Head of caudate nucleus (tissue), 42 donors: ENCODE measurements at regions of chr16 and their contacts with region 1.

Region 1: GRCh38 chr16:51762081-51762996 is 611.3 kb upstream of the SALL1 start:
- DNase-seq: peak; percentile 73 to 97 (median 90)

Region 2: DNA sequence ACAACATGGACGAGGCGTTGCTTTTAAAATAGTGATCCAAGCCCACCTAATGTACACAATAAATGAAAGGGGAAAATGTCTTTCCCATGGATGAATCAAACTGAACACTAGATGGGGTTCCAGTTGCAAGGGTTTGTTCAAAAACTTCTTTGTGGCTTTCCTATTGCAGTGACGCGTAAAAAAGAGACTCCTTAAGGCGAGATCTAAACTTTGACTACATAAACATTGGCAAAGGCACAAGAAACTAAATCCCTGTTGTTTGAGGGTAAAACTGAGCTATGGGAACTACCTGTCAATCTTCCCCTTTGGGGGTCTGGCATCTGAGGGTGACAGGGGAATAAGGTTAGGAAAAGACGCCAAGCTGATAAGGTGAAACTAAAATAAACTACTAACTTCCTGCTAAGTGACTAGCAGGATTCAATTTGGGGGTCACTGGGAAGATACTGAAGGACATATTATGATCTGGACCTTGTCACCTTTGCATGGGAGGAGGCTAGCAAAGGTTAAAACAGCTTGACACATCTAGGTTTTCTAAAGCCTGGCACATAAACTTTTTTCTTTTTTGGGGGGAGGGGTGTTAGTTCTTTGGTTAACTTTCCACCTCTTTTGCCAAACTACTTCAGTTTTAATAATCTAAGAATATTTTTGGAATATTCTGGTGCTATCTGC is 615.9 kb before region 1 on chr16:
- intact Hi-C with region 1: loop called (anchors 5 kb)
- DNase-seq: peak in 1 of 42 donors; percentile 35

Region 3: DNA sequence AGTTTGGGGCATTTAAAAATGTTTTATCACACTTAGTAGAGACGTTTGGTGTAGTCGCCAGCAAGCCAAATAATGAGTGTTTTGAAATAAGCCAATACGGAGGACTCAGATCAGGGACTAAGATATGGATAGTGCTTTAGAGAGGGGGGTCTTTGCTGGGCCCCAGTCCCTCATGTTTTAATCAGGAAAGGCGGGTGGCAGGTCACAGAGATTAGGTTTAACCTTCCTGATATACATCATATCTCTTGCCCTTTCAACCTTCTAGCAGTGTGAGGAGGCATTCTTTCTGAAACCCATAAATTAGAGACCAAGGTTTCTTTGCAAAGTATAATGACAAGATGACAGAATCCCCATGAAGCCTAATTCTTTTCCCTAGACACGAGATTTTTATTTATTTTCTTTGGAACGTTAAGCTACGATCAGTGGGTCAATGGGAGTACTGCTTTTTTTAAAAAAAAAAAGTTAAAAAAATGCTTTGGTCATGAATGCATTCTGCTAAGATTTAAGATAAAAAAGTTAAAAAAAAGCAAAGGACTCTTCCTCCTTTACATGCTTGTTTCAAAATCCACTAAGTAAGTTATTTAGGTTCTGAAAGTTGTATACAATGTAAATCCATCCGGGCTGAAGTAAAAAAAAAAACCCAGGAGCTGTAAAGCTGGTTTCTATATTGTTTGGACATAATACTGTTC is 39.2 kb before region 1 on chr16:
- intact Hi-C with region 1: no loop called
- DNase-seq: no peak

Region 4: GRCh38 chr16:51797669-51798259 is 35.4 kb after region 1 on chr16:
- intact Hi-C with region 1: no loop called
- DNase-seq: no peak

Region 5: DNA sequence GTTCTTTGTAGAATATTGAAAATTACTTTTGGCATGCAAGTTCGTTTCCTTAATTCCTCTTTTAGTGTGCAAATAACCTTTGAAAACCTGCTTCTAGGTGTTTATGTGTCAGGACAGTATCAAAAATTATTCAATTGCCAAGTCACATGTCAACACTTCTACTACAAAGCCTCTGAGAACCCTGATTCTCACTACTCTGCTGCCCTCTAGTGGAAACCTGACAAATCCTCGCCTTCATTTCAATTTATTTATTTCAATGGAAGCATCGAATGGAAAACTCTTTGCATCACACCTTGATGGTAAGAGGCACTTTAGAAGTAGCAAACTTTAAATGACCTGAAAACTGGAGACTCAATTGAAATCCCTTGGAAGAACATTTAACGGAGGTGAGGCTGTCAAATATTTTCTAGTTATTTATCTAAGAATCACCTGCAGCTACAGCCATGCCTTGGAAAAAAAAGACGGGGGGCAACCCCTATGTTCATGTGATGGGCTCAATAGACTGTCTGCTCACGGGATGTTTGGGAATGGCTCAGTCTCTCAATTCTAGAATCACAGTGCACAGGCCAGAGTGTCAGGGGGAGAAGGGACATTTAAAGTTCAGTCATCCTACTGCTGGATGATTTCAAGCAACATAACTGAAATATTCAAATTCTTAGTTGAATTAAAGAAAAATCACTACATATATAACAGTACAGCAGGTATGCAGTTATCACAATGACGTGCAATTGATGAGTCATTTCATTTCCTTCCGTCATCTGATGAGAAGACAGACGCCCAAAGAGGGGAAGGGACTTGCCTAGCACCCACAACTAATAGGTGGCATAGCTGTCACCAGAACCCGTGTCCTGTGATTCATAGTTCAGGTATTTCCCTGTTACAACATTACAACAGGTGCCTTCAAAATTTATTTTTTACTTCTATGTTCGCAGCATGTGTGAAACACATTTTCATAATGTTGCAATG is 220.7 kb after region 1 on chr16:
- intact Hi-C with region 1: loop called (anchors 10 kb)
- DNase-seq: peak in 33 of 42 donors; percentile 22 to 89 (median 60)